Ascending aorta (tissue), 2 donors: ENCODE measurements at regions of chr10 and their contacts with region 1.

Region 1: GRCh38 chr10:84424731-84425167 is 96.4 kb downstream of the CCSER2 start:
- DNase-seq: peak; percentile 71 to 94
- H3K4me3 ChIP-seq: peak overlapping the region; percentile 36 to 38
- H3K27ac ChIP-seq: peak overlapping the region; percentile 73 to 85
- H3K4me1 ChIP-seq: peaks cover 0 to 23% of the 10 kb centered on the region in 2 donors
- H3K27me3 ChIP-seq: no peaks in the 10 kb centered on the region
- CTCF ChIP-seq: no peak

Region 2: GRCh38 chr10:83908506-83908905 is 516.2 kb before region 1 on chr10:
- intact Hi-C with region 1: no loop called
- DNase-seq: no peak
- H3K4me3 ChIP-seq: no peak overlapping the region
- H3K27ac ChIP-seq: no peak overlapping the region
- H3K4me1 ChIP-seq: no peaks in the 10 kb centered on the region
- H3K27me3 ChIP-seq: no peaks in the 10 kb centered on the region
- CTCF ChIP-seq: no peak

Region 3: GRCh38 chr10:84139126-84140035 is 285.4 kb before region 1 on chr10 and contains the start of gene GHITM:
- intact Hi-C with region 1: loop called (anchors 5 kb)
- DNase-seq: peak; percentile 95 to 99
- H3K4me3 ChIP-seq: peak within 1 kb of the TSS; percentile 87 to 99
- H3K27ac ChIP-seq: peak within 1 kb of the TSS; percentile 96 to 97
- H3K4me1 ChIP-seq: peaks cover 5 to 13% of the 10 kb centered on the region in 2 donors
- H3K27me3 ChIP-seq: no peaks in the 10 kb centered on the region
- CTCF ChIP-seq: peak; percentile 37 to 62 (median 43)
- total RNA-seq, gene GHITM: 77.2 TPM

Region 4: DNA sequence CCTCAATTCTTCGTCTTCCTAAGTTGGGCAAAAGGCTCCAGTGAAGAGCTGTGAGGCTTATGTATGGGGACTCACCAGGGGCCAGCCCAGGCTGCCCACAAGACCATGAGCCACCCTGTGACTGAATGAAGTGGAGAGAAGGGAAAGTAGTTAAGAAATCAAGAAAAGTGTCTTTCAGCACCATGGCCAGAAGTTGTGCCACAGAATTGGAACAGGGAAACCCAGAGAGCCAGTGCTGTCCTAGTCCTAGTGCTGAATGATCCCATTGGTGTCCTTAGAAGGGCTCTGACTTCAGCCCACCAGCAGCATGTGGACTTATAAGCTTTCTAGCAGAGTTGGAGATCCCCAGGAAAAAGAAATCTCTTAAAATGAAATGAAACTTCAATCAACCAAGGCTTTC is 133.4 kb before region 1 on chr10:
- intact Hi-C with region 1: no loop called
- DNase-seq: no peak
- H3K4me3 ChIP-seq: no peak overlapping the region
- H3K27ac ChIP-seq: no peak overlapping the region
- H3K4me1 ChIP-seq: peaks cover 0 to 21% of the 10 kb centered on the region in 2 donors
- H3K27me3 ChIP-seq: no peaks in the 10 kb centered on the region
- CTCF ChIP-seq: no peak

Region 5: DNA sequence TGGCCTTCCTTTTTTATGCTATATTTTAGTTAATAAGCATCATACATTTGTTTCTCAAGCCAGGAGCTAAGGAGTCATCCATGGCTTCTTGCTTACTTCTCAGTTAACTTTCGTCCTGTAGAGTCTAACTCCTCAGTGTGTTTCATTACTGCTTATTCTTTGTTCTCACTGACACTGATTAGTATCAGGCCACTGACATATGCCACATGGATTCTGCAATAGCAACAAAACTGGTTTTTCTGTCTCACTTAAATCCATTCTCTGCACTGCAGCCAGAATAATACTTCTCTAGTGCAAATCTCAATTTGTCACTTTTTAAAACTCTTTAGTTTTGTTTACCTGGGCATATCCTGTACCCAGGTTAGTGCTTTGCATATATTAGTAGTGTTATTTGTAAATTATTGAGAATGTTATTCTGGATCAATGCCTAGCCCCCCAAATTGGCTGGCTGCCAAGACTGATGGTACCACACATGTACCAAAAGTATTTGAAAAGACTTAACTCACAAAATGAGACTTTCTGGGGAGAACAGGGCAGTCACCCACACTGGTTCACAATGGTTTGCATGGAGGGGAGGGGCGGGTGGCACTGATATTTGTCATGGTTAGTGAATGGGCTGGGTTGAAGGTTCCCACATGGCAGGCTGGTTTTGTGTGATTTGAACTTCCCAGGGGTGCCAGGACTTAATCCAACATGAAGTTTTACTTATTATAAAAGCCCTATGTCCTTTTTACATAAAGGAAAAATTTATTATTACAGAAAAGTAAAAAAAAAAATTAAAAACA is 17.2 kb before region 1 on chr10:
- intact Hi-C with region 1: loop called (anchors 2 kb)
- DNase-seq: no peak
- H3K4me3 ChIP-seq: no peak overlapping the region
- H3K27ac ChIP-seq: peak overlapping the region; percentile 30 to 58
- H3K4me1 ChIP-seq: peaks cover 0 to 3% of the 10 kb centered on the region in 2 donors
- H3K27me3 ChIP-seq: no peaks in the 10 kb centered on the region
- CTCF ChIP-seq: no peak

Region 6: GRCh38 chr10:84510121-84510520 is 85.4 kb after region 1 on chr10:
- intact Hi-C with region 1: no loop called
- DNase-seq: no peak
- H3K4me3 ChIP-seq: no peak overlapping the region
- H3K27ac ChIP-seq: no peak overlapping the region
- H3K4me1 ChIP-seq: no peaks in the 10 kb centered on the region
- H3K27me3 ChIP-seq: no peaks in the 10 kb centered on the region
- CTCF ChIP-seq: no peak